ENCODE measurements at regions of chr5 and their contacts with region 1.

Region 1: DNA sequence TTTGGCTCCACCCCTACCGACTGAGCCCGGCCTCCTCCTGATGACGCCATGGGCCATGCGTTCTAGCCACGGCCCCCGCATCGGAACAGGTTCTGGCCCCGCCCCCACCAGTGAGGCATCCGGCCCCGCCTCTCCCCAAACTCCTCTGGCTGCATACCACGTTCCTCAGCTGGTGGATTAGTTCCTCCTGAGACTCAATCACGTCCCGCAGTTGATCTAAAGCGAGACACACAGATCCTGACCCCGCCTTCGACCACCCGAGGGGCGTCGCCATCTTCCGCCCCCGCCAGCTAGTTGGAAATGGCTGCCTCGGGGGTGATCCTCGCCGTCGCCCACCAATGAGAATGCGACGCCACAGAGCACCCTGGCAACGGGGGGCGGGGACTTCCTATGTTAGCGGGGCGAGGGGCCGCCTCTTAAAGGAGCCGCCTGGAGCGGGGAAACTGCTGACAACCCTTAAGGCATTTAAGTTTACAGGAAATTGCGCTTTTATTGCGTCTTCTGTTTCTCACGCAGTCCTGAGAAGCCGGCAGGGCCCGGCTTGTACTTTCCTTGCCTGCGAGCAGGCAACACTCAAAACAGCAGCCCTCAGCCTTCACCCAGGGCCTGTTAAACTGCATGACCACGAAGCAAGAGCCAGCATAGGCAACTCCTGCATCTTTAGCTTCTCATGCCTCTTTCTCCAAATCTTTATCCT is at the start of gene SPATA24:
- DNase-seq: peak; percentile 90 to 99 (median 98)
- ATAC-seq: peak; percentile 94
- H3K4me3 ChIP-seq: peak within 1 kb of the TSS; percentile 56
- H3K4me3 Mint-ChIP-seq: peak within 1 kb of the TSS; percentile 88 to 98 (median 94)
- H3K27ac ChIP-seq: peak within 1 kb of the TSS; percentile 88
- H3K27ac Mint-ChIP-seq: peak within 1 kb of the TSS; percentile 96 to 100 (median 99)
- H3K4me1 ChIP-seq: peaks cover 16 to 18% of the 10 kb centered on the region in 2 donors
- H3K4me1 Mint-ChIP-seq: peaks cover 26 to 42% (median 36%) of the 10 kb centered on the region in 7 donors
- H3K27me3 ChIP-seq: no peaks in the 10 kb centered on the region
- H3K27me3 Mint-ChIP-seq: no peaks in the 10 kb centered on the region
- total RNA-seq, gene SPATA24: 4.4 to 7.6 (median 5.8) TPM

Region 2: GRCh38 chr5:138337685-138338410 is 1066.1 kb before region 1 on chr5 and contains the start of gene FAM53C:
- CTCF ChIA-PET with region 1: no interaction called
- POLR2A ChIA-PET with region 1: no interaction called
- intact Hi-C with region 1: loop called (anchors 5 kb)
- DNase-seq: peak; percentile 87 to 98 (median 93)
- ATAC-seq: peak; percentile 91
- H3K4me3 ChIP-seq: peak within 1 kb of the TSS; percentile 86
- H3K4me3 Mint-ChIP-seq: peak within 1 kb of the TSS; percentile 77 to 98 (median 94)
- H3K27ac ChIP-seq: peak within 1 kb of the TSS; percentile 95
- H3K27ac Mint-ChIP-seq: peak within 1 kb of the TSS; percentile 96 to 100 (median 99)
- H3K4me1 ChIP-seq: peaks cover 17 to 25% of the 10 kb centered on the region in 2 donors
- H3K4me1 Mint-ChIP-seq: peaks cover 16 to 42% (median 39%) of the 10 kb centered on the region in 7 donors
- H3K27me3 ChIP-seq: no peaks in the 10 kb centered on the region
- H3K27me3 Mint-ChIP-seq: no peaks in the 10 kb centered on the region
- total RNA-seq, gene FAM53C: 25.0 to 71.8 (median 27.7) TPM

Region 3: GRCh38 chr5:139197710-139198669 is 205.9 kb before region 1 on chr5 and contains the start of gene SIL1:
- CTCF ChIA-PET with region 1: no interaction called
- POLR2A ChIA-PET with region 1: no interaction called
- intact Hi-C with region 1: loop called (anchors 1 kb)
- DNase-seq: peak; percentile 88 to 94 (median 91)
- ATAC-seq: peak; percentile 99
- H3K4me3 ChIP-seq: peak within 1 kb of the TSS; percentile 97
- H3K4me3 Mint-ChIP-seq: peak within 1 kb of the TSS; percentile 83 to 96 (median 90)
- H3K27ac ChIP-seq: peak within 1 kb of the TSS; percentile 89
- H3K27ac Mint-ChIP-seq: peak within 1 kb of the TSS; percentile 86 to 96 (median 91)
- H3K4me1 ChIP-seq: peaks cover 8% of the 10 kb centered on the region in 2 donors
- H3K4me1 Mint-ChIP-seq: peaks cover 17 to 38% (median 26%) of the 10 kb centered on the region in 7 donors
- H3K27me3 ChIP-seq: no peaks in the 10 kb centered on the region
- H3K27me3 Mint-ChIP-seq: no peaks in the 10 kb centered on the region
- total RNA-seq, gene SIL1: 11.9 to 27.1 (median 22.8) TPM

Region 4: GRCh38 chr5:139273572-139274289 is 130.2 kb before region 1 on chr5:
- CTCF ChIA-PET with region 1: no interaction called
- POLR2A ChIA-PET with region 1: interaction called, 4 read pairs
- intact Hi-C with region 1: loop called in 1 of 2 experiments (anchors 1 kb)
- DNase-seq: peak; percentile 71 to 95 (median 83)
- ATAC-seq: peak; percentile 99
- H3K4me3 ChIP-seq: peak overlapping the region; percentile 71
- H3K4me3 Mint-ChIP-seq: peak overlapping the region; percentile 77 to 92 (median 90)
- H3K27ac ChIP-seq: peak overlapping the region; percentile 69
- H3K27ac Mint-ChIP-seq: peak overlapping the region; percentile 54 to 92 (median 85)
- H3K4me1 ChIP-seq: peaks cover 26 to 27% of the 10 kb centered on the region in 2 donors
- H3K4me1 Mint-ChIP-seq: peaks cover 30 to 54% (median 47%) of the 10 kb centered on the region in 7 donors
- H3K27me3 ChIP-seq: no peaks in the 10 kb centered on the region
- H3K27me3 Mint-ChIP-seq: peaks cover 0 to 3% (median 0%) of the 10 kb centered on the region in 5 donors

Region 5: DNA sequence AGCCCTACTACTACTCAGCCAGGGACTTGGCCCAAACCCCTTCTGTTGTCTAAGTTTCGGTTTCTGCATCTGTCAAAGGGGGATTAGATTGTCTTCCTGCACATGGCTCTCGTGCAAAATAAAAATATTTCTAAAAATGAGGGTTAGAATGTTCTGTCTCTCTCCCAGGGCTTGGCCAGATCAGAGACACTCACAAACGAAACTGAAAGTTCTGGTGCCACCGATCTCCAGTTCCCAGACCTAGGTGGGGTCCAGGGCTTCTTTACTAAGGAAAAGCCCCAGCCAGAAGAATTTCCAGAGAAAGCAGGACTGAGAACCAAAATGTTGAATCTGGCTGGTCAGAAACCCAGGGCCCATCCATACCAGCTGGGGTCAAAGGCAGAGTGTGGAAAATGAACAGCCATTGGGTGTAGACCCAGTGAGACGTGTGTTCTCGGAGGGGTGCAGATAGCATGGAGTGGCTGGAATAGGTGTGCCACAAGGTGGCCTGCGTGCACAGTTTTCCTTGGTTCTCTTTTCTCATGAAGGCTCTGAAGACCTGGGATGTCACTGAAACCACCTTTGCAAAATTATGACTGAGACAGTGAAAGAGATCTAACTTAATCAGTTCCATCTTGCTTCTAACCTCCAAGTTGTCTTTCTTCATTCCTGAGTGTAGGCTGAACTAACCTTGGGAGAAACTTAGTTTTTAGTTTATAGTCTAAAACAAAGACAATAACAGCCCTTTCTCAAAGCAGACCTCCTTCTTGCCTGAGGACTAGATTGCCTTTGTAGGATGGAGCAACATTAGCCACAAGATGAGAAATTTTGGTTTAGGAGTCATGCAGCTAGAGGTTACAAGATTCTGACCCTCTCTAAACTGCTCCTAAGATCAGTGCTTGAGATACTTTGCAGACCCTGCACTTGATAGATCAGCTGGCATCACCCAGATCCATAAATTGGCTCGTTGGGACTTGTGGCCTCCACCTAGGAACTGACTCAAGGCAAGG is 18.6 kb before region 1 on chr5:
- CTCF ChIA-PET with region 1: no interaction called
- POLR2A ChIA-PET with region 1: interaction called, 24 read pairs
- intact Hi-C with region 1: loop called in 1 of 2 experiments (anchors 2 kb)
- DNase-seq: peak in 4 of 9 donors; percentile 25 to 40 (median 37)
- ATAC-seq: peak; percentile 54
- H3K4me3 ChIP-seq: peak overlapping the region; percentile 34
- H3K4me3 Mint-ChIP-seq: peak overlapping the region; percentile 83 to 93 (median 87)
- H3K27ac ChIP-seq: peak overlapping the region; percentile 69
- H3K27ac Mint-ChIP-seq: peak overlapping the region; percentile 90 to 98 (median 92)
- H3K4me1 ChIP-seq: peaks cover 12 to 19% of the 10 kb centered on the region in 2 donors
- H3K4me1 Mint-ChIP-seq: peaks cover 20 to 59% (median 38%) of the 10 kb centered on the region in 7 donors
- H3K27me3 ChIP-seq: no peaks in the 10 kb centered on the region
- H3K27me3 Mint-ChIP-seq: no peaks in the 10 kb centered on the region

Region 6: DNA sequence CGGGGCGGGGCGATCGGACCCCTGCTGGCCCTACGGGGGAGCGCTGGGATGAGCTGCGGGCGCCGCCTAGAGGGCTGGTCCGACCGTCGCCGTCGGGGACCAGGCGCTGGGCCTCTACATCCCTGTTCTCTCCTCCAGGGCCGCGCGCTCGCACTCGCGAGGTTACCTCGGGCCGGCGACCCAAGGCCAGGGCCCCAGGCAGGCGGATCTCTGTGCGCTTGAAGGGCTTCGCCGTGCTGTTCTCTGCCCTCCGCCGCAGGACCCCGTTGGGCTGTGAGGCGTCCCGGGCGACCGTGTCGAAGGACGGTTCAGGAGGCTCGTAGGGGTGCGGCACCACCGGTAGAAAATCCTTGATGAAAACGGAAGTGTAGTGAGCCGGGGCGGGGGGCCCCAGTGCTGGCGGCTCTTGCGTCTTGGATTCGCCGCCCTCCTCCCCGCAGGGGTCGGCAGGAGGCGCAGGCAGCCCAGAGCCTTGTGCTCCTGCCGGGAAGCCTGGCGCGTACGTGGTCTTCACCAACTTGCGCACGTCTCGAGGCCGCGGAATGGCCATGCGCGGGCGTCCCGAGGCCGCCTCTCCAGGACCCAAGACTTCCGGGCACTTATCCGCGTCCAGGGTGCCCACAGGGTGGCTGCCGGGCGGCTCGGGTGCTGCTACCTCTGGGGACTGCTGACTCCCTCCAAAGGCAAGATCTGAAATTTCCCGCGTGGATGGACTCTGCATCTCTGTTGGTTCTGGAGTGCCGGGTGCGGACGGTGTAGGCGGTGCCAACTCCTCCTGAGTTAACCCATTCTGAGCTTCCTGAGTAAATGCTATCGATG is 11.0 kb before region 1 on chr5:
- CTCF ChIA-PET with region 1: interaction called, 3 read pairs
- POLR2A ChIA-PET with region 1: interaction called, 24 read pairs
- intact Hi-C with region 1: loop called (anchors 1 kb)
- DNase-seq: peak; percentile 39 to 87 (median 60)
- ATAC-seq: peak; percentile 82
- H3K4me3 ChIP-seq: peak overlapping the region; percentile 76
- H3K4me3 Mint-ChIP-seq: peak overlapping the region; percentile 87 to 97 (median 90)
- H3K27ac ChIP-seq: peak overlapping the region; percentile 17
- H3K27ac Mint-ChIP-seq: peak overlapping the region in 6 of 9 donors; percentile 7 to 97 (median 59)
- H3K4me1 ChIP-seq: peaks cover 5 to 34% of the 10 kb centered on the region in 2 donors
- H3K4me1 Mint-ChIP-seq: peaks cover 12 to 61% (median 23%) of the 10 kb centered on the region in 7 donors
- H3K27me3 ChIP-seq: no peaks in the 10 kb centered on the region
- H3K27me3 Mint-ChIP-seq: no peaks in the 10 kb centered on the region

Region 7: GRCh38 chr5:139415221-139415861 is 11.4 kb after region 1 on chr5:
- CTCF ChIA-PET with region 1: interaction called, 3 read pairs
- POLR2A ChIA-PET with region 1: interaction called, 9 read pairs
- intact Hi-C with region 1: loop called in 1 of 2 experiments (anchors 1 kb)
- DNase-seq: no peak
- ATAC-seq: no peak
- H3K4me3 ChIP-seq: no peak overlapping the region
- H3K4me3 Mint-ChIP-seq: peak overlapping the region in 5 of 10 donors; percentile 25 to 83 (median 37)
- H3K27ac ChIP-seq: no peak overlapping the region
- H3K27ac Mint-ChIP-seq: peak overlapping the region in 5 of 9 donors; percentile 7 to 93 (median 27)
- H3K4me1 ChIP-seq: peaks cover 0 to 17% of the 10 kb centered on the region in 2 donors
- H3K4me1 Mint-ChIP-seq: peaks cover 2 to 71% (median 25%) of the 10 kb centered on the region in 7 donors
- H3K27me3 ChIP-seq: no peaks in the 10 kb centered on the region
- H3K27me3 Mint-ChIP-seq: no peaks in the 10 kb centered on the region